ENCODE measurements at regions of chr10 and their contacts with region 1.

Region 1: DNA sequence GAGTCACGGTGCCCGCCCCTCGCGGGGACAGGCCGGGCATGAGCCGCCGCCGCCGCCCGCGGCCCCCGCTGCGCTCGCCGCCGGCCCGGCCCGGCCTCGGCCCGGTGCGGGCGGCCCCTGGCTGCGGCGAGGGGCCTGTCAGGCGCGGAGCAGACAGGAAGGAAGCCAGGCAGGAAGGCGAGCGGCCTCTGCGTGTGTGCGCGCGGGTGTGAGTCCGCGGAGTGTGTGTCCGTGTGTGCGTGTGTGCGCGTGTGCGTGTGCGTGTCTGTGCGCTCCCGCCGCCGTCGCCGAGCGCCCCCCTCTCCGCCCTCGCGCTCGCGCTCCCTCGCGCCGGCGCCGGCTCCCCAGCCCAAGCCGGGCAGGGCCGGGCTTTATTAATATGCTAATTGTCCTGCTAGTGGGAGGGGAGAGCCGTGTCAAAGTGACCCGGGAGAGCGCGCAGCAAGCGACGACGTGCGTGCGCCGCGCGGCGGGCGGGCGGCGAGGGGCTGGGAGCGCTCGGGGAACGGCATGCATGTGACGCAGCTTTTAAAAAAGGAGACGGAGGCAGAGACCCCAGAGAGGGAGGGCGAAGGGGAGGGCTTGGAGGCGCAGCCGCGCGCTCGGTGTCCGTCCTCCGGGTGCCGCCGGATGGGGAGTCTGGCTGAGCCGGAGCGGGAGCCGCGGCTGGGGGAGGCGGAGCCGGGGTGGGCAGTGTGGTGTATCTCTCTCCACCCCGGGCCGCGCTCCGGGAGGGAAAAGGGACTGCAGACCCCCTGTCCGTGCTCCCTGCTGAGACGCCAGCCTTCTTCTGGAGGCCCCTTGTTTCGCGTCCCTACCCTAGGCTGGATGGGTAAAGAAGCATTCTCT is at the start of gene LDB1:
- DNase-seq: peak; percentile 80
- ATAC-seq: peak; percentile 53
- H3K4me3 Mint-ChIP-seq: peak within 1 kb of the TSS; percentile 91
- H3K27ac Mint-ChIP-seq: peak within 1 kb of the TSS; percentile 94
- H3K4me1 Mint-ChIP-seq: peaks cover 41% of the 10 kb centered on the region
- H3K27me3 Mint-ChIP-seq: no peaks in the 10 kb centered on the region
- total RNA-seq, gene LDB1: 115 to 117 TPM

Region 2: DNA sequence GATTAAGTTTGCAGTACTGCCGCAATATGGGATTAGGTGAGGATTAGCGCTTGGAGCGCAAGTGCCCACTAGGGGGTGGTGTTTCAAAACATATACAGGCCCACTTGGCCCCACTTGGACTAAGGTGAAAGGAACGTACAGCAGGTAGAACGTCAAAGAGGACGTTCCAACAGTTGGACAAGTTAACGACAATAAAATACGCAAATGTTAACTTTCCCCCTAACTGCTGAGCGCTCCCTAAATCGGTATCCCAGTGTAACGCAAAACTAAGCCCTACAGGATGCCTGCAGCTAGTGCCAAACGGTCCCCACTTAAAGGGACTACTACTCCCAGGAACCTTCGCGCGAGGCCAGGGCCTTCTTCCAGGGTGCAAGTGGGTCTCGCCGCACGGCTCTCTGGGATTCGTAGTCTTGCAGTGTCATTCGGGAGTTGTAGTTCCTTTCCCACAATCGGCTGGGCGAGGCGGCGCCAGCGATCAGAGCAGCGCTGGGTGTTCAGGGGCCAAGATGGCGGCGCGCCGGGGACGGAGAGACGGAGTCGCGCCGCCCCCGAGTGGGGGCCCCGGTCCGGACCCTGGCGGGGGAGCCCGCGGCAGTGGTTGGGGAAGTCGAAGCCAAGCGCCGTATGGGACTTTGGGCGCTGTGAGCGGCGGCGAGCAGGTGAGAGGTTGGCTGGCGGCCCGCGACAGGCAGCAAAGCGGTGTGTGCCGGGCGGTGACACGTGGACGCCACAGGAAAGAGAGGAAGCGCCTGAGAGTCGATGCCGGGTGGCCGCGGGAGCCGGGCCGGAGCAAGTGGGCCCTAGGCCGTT is 12.4 kb after region 1 on chr10 and contains the start of gene PPRC1:
- POLR2A ChIA-PET with region 1: interaction called, 23 read pairs
- DNase-seq: peak; percentile 93
- ATAC-seq: peak; percentile 94
- H3K4me3 Mint-ChIP-seq: peak within 1 kb of the TSS; percentile 97
- H3K27ac Mint-ChIP-seq: peak within 1 kb of the TSS; percentile 95
- H3K4me1 Mint-ChIP-seq: peaks cover 26% of the 10 kb centered on the region
- H3K27me3 Mint-ChIP-seq: no peaks in the 10 kb centered on the region
- total RNA-seq, gene PPRC1: 46.4 to 47.4 TPM

Region 3: DNA sequence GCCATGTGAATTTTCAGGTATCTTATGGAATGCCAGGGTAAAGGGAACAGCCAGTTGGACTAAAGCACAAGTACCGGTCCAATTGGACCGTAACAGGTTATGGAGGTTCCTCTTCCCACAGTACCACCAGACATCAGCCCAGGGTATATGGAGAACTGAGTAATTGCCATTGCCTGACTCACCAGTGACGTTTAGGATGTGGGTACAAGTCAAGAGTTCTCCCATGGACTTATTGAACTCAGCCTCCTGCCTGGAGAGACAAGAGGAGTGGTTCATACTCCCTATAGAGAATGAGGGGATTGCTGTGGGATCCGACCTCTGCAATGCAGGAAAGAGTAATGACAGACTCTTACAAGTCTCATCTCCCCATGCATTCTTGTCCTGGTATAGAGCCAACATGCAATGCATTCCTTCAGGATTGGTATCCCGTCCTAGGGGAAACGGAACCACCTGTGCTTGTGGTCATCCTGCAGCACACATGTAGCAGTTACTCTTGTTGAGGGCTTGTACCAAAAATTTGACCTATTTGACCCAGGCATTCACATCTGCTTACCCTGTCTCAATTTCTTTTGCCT is 75.0 kb after region 1 on chr10:
- POLR2A ChIA-PET with region 1: no interaction called
- DNase-seq: no peak
- ATAC-seq: no peak
- H3K4me3 Mint-ChIP-seq: no peak overlapping the region
- H3K27ac Mint-ChIP-seq: no peak overlapping the region
- H3K4me1 Mint-ChIP-seq: no peaks in the 10 kb centered on the region
- H3K27me3 Mint-ChIP-seq: no peaks in the 10 kb centered on the region